B cell (primary cell): ENCODE measurements at regions of chr11 and their contacts with region 1.

Region 1: GRCh38 chr11:14454861-14455632 is 44.6 kb downstream of the COPB1 start:
- DNase-seq: peak; percentile 60
- ATAC-seq: no peak
- H3K4me3 ChIP-seq: no peak overlapping the region
- H3K4me3 Mint-ChIP-seq: no peak overlapping the region
- H3K27ac ChIP-seq: no peak overlapping the region
- H3K27ac Mint-ChIP-seq: no peak overlapping the region
- H3K4me1 ChIP-seq: peaks cover 9 to 15% of the 10 kb centered on the region in 2 donors
- H3K4me1 Mint-ChIP-seq: peaks cover 24% of the 10 kb centered on the region
- H3K27me3 ChIP-seq: no peaks in the 10 kb centered on the region
- H3K27me3 Mint-ChIP-seq: no peaks in the 10 kb centered on the region
- CTCF ChIP-seq: peak; percentile 88

Region 2: GRCh38 chr11:13772223-13773046 is 682.6 kb before region 1 on chr11:
- CTCF ChIA-PET with region 1: interaction called, 12 read pairs
- POLR2A ChIA-PET with region 1: no interaction called
- intact Hi-C with region 1: loop called (anchors 10 kb)
- DNase-seq: peak; percentile 79
- ATAC-seq: peak; percentile 65
- H3K4me3 ChIP-seq: no peak overlapping the region
- H3K4me3 Mint-ChIP-seq: no peak overlapping the region
- H3K27ac ChIP-seq: no peak overlapping the region
- H3K27ac Mint-ChIP-seq: no peak overlapping the region
- H3K4me1 ChIP-seq: peaks cover 0 to 7% of the 10 kb centered on the region in 2 donors
- H3K4me1 Mint-ChIP-seq: peaks cover 6% of the 10 kb centered on the region
- H3K27me3 ChIP-seq: peaks cover 0 to 4% (median 0%) of the 10 kb centered on the region in 4 experiments
- H3K27me3 Mint-ChIP-seq: peaks cover 17% of the 10 kb centered on the region
- CTCF ChIP-seq: peak; percentile 79

Region 3: DNA sequence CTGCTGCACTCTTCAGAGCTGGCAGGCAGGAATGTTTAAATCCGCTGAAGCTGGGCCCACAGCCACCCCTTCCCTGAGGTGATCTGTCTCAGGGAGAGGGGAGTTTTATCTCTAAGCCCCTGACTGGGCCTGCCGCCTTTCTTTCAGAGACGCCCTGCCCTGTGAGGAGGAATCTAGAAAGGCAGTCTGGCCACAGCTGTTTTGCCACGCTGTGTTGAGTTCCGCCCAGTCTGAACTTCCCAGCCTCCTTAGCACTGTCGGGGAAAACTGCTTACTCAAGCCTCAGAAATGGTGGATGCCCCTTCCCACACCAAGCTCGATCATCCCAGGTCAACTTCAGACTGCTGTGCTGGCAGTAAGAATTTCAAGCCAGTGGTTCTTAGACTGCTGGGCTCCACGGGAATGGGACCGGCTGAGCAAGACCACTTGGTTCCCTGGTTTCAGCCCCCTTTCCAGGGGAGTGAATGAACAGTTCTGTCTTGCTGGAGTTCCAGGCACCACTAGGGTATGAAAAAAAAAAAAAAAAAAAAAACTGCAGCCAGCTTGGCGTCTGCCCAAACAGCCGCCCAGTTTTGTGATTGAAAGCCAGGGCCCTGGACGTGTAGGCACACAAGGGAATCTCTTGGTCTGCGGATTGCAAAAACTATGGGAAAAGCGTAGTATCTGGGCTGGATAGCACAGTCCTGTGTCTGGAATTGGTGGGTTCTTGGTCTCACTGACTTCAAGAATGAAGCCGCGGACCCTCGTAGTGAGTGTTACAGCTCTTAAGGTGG is 365.2 kb before region 1 on chr11:
- CTCF ChIA-PET with region 1: no interaction called
- POLR2A ChIA-PET with region 1: no interaction called
- intact Hi-C with region 1: no loop called
- DNase-seq: no peak
- ATAC-seq: no peak
- H3K4me3 ChIP-seq: no peak overlapping the region
- H3K4me3 Mint-ChIP-seq: no peak overlapping the region
- H3K27ac ChIP-seq: no peak overlapping the region
- H3K27ac Mint-ChIP-seq: no peak overlapping the region
- H3K4me1 ChIP-seq: no peaks in the 10 kb centered on the region
- H3K4me1 Mint-ChIP-seq: no peaks in the 10 kb centered on the region
- H3K27me3 ChIP-seq: peaks cover 0 to 4% (median 2%) of the 10 kb centered on the region in 4 experiments
- H3K27me3 Mint-ChIP-seq: peaks cover 38% of the 10 kb centered on the region
- CTCF ChIP-seq: no peak

Region 4: DNA sequence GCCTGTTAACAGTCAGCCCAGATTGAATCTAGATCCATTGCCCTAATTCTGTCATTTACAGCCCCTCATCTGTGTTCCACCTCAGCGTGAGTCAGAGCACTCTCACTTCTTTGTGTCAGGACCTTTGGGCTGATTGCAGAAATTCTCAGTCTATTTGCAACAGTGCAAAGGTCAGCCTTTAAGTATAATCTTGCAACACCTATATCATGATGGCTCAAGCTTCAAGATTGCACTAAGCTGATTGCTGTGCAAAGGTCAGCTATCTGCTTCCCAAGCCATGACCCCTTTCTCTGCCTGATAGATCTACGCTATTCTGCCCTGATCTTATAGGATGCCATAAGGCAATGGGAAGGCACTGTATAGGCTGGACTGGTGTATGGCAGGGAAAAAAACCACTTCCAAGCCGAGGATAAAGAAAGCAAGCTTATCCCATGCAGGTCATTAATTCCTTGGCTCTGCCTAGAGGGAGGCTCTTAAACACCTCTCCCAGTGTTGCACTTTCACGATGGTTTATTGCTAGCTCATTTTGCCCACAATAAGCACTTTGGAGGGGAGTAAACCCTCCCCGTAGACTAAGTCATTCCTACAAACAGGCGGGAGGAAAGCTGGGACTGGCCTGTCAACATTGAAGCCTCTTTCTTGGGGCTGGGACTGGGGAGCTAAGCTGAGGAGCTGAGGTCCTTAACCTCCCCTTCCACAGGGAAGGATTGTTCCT is 196.7 kb before region 1 on chr11:
- CTCF ChIA-PET with region 1: interaction called, 13 read pairs
- POLR2A ChIA-PET with region 1: interaction called, 5 read pairs
- intact Hi-C with region 1: no loop called
- DNase-seq: no peak
- ATAC-seq: no peak
- H3K4me3 ChIP-seq: no peak overlapping the region
- H3K4me3 Mint-ChIP-seq: no peak overlapping the region
- H3K27ac ChIP-seq: no peak overlapping the region
- H3K27ac Mint-ChIP-seq: no peak overlapping the region
- H3K4me1 ChIP-seq: no peaks in the 10 kb centered on the region
- H3K4me1 Mint-ChIP-seq: no peaks in the 10 kb centered on the region
- H3K27me3 ChIP-seq: peaks cover 0 to 3% (median 0%) of the 10 kb centered on the region in 4 experiments
- H3K27me3 Mint-ChIP-seq: peaks cover 7% of the 10 kb centered on the region
- CTCF ChIP-seq: no peak

Region 5: GRCh38 chr11:14308114-14308896 is 146.7 kb before region 1 on chr11:
- CTCF ChIA-PET with region 1: interaction called, 474 read pairs
- POLR2A ChIA-PET with region 1: no interaction called
- intact Hi-C with region 1: no loop called
- DNase-seq: peak; percentile 61
- ATAC-seq: peak; percentile 65
- H3K4me3 ChIP-seq: peak overlapping the region in 1 of 5 experiments; percentile 8
- H3K4me3 Mint-ChIP-seq: peak overlapping the region; percentile 0
- H3K27ac ChIP-seq: peak overlapping the region; percentile 64 to 97
- H3K27ac Mint-ChIP-seq: no peak overlapping the region
- H3K4me1 ChIP-seq: peaks cover 83 to 90% of the 10 kb centered on the region in 2 donors
- H3K4me1 Mint-ChIP-seq: peaks cover 41% of the 10 kb centered on the region
- H3K27me3 ChIP-seq: no peaks in the 10 kb centered on the region
- H3K27me3 Mint-ChIP-seq: no peaks in the 10 kb centered on the region
- CTCF ChIP-seq: peak; percentile 74

Region 6: GRCh38 chr11:14380947-14381561 is 74.0 kb before region 1 on chr11:
- CTCF ChIA-PET with region 1: interaction called, 13 read pairs
- POLR2A ChIA-PET with region 1: no interaction called
- intact Hi-C with region 1: no loop called
- DNase-seq: peak; percentile 85
- ATAC-seq: peak; percentile 96
- H3K4me3 ChIP-seq: peak overlapping the region in 4 of 5 experiments; percentile 47 to 69 (median 62)
- H3K4me3 Mint-ChIP-seq: peak overlapping the region; percentile 89
- H3K27ac ChIP-seq: peak overlapping the region; percentile 36 to 56
- H3K27ac Mint-ChIP-seq: peak overlapping the region; percentile 73
- H3K4me1 ChIP-seq: peaks cover 12 to 14% of the 10 kb centered on the region in 2 donors
- H3K4me1 Mint-ChIP-seq: peaks cover 19% of the 10 kb centered on the region
- H3K27me3 ChIP-seq: peaks cover 0 to 3% (median 0%) of the 10 kb centered on the region in 4 experiments
- H3K27me3 Mint-ChIP-seq: peaks cover 6% of the 10 kb centered on the region
- CTCF ChIP-seq: no peak

Region 7: DNA sequence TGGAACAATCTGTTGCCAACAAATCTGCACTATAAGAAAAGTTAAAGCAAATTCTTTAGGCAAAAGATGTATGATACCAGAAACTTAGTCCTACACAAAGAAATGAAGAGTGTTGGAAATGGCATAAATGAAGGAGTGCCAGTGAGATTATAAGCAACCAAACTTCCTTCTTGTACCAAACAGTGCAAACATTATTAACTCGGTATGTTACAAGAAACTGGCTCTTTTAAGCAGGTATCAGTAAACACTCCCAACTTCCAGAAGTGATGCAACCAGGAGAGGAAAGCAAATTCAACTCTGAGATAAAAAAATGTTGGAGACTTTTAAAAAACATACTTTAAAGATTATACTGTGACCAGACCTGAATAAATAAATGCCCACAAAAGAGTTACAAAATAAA is 16.1 kb after region 1 on chr11:
- CTCF ChIA-PET with region 1: interaction called, 23 read pairs
- POLR2A ChIA-PET with region 1: no interaction called
- intact Hi-C with region 1: no loop called
- DNase-seq: no peak
- ATAC-seq: no peak
- H3K4me3 ChIP-seq: no peak overlapping the region
- H3K4me3 Mint-ChIP-seq: no peak overlapping the region
- H3K27ac ChIP-seq: no peak overlapping the region
- H3K27ac Mint-ChIP-seq: no peak overlapping the region
- H3K4me1 ChIP-seq: no peaks in the 10 kb centered on the region
- H3K4me1 Mint-ChIP-seq: peaks cover 2% of the 10 kb centered on the region
- H3K27me3 ChIP-seq: no peaks in the 10 kb centered on the region
- H3K27me3 Mint-ChIP-seq: no peaks in the 10 kb centered on the region
- CTCF ChIP-seq: no peak

Region 8: DNA sequence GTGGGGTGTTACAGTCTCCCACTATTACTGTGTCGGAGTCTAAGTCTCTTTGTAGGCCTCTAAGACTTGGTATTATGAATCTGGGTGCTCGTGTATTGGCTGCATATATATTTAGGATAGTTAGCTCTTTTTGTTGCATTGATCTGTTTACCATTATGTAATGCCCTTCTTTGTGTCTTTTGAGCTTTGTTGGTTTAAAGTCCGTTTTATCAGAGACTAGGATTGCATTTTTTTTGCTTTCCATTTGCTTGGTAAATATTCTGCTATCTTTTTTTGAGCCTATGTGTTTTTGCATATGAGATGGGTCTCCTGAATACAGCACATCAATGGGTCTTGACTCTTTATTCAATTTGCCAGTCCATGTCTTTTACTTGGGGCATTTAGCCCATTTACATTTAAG is 286.1 kb after region 1 on chr11:
- CTCF ChIA-PET with region 1: no interaction called
- POLR2A ChIA-PET with region 1: no interaction called
- intact Hi-C with region 1: no loop called
- DNase-seq: no peak
- ATAC-seq: no peak
- H3K4me3 ChIP-seq: no peak overlapping the region
- H3K4me3 Mint-ChIP-seq: no peak overlapping the region
- H3K27ac ChIP-seq: no peak overlapping the region
- H3K27ac Mint-ChIP-seq: no peak overlapping the region
- H3K4me1 ChIP-seq: no peaks in the 10 kb centered on the region
- H3K4me1 Mint-ChIP-seq: no peaks in the 10 kb centered on the region
- H3K27me3 ChIP-seq: peaks cover 0 to 3% (median 0%) of the 10 kb centered on the region in 4 experiments
- H3K27me3 Mint-ChIP-seq: peaks cover 15% of the 10 kb centered on the region
- CTCF ChIP-seq: no peak